B cell (primary cell): ENCODE measurements at regions of chr9 and their contacts with region 1.

Region 1: DNA sequence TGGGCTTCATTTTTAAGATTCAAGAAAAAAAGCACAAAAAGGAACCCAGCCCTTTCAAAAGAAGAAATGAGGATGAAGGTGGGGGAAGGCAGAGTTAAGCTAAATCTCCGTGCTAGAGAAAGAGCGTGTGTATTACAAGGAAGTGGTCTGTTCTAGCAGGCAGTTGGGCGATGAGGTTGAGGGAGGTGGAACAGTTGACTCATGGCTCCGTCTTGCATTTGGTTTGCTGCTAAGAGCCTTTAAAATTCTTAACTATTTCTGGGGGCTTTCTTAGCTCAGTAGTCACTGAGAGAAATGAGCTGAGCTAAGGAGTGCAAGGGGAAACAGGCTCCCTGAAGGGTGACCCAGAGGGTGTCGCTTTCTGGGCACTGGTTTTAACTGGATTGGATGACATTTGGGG is 117.4 kb downstream of the GCNT1 start:
- DNase-seq: peak; percentile 44
- ATAC-seq: peak; percentile 83
- H3K4me3 ChIP-seq: peak overlapping the region in 1 of 5 experiments; percentile 27
- H3K4me3 Mint-ChIP-seq: peak overlapping the region; percentile 21
- H3K27ac ChIP-seq: peak overlapping the region in 1 of 2 donors; percentile 14
- H3K27ac Mint-ChIP-seq: peak overlapping the region; percentile 35
- H3K4me1 ChIP-seq: peaks cover 26 to 31% of the 10 kb centered on the region in 2 donors
- H3K4me1 Mint-ChIP-seq: peaks cover 44% of the 10 kb centered on the region
- H3K27me3 ChIP-seq: no peaks in the 10 kb centered on the region
- H3K27me3 Mint-ChIP-seq: peaks cover 14% of the 10 kb centered on the region
- CTCF ChIP-seq: no peak

Region 2: GRCh38 chr9:76512826-76513225 is 63.5 kb before region 1 on chr9:
- CTCF ChIA-PET with region 1: no interaction called
- POLR2A ChIA-PET with region 1: no interaction called
- intact Hi-C with region 1: loop called (anchors 5 kb)
- DNase-seq: no peak
- ATAC-seq: no peak
- H3K4me3 ChIP-seq: no peak overlapping the region
- H3K4me3 Mint-ChIP-seq: no peak overlapping the region
- H3K27ac ChIP-seq: no peak overlapping the region
- H3K27ac Mint-ChIP-seq: no peak overlapping the region
- H3K4me1 ChIP-seq: no peaks in the 10 kb centered on the region
- H3K4me1 Mint-ChIP-seq: peaks cover 7% of the 10 kb centered on the region
- H3K27me3 ChIP-seq: no peaks in the 10 kb centered on the region
- H3K27me3 Mint-ChIP-seq: no peaks in the 10 kb centered on the region
- CTCF ChIP-seq: no peak